ENCODE measurements at regions of chr21 and their contacts with region 1.

Region 1: GRCh38 chr21:32770871-32771523 is 558 bp downstream of the PAXBP1 start:
- DNase-seq: peak; percentile 62
- H3K4me3 ChIP-seq: peak overlapping the region; percentile 59 to 84 (median 73)
- H3K27ac ChIP-seq: peak overlapping the region; percentile 67
- H3K4me1 ChIP-seq: peaks cover 10% of the 10 kb centered on the region
- H3K27me3 ChIP-seq: no peaks in the 10 kb centered on the region
- CTCF ChIP-seq: peak in 1 of 2 donors; percentile 10

Region 2: DNA sequence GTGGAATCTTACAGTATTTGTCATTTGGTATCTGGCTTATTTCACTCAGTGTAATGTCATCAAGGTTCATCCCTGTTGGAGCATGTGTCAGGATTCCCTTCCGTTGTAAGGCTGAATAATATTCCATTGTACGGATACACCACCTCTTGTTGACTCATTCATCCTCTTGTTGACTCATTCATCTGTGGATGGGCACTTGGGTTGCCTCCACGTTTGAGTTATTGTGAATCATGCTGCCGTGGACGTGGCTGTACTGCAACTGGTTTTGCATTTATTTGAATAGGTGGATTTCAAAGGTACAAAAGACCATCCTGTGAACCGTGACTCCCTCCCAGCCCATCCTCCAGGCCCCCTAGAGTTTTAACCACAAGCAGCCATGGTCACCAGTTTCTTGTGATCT is 173.8 kb before region 1 on chr21:
- CTCF ChIA-PET with region 1: no interaction called
- dilution Hi-C with region 1: no loop called
- in situ Hi-C with region 1: no loop called
- intact Hi-C with region 1: no loop called
- DNase-seq: peak; percentile 97
- H3K4me3 ChIP-seq: no peak overlapping the region
- H3K27ac ChIP-seq: peak overlapping the region; percentile 84
- H3K4me1 ChIP-seq: peaks cover 29% of the 10 kb centered on the region
- H3K27me3 ChIP-seq: no peaks in the 10 kb centered on the region
- CTCF ChIP-seq: no peak

Region 3: GRCh38 chr21:32826329-32827167 is 55.6 kb after region 1 on chr21:
- CTCF ChIA-PET with region 1: no interaction called
- dilution Hi-C with region 1: no loop called
- in situ Hi-C with region 1: no loop called
- intact Hi-C with region 1: loop called (anchors 5 kb)
- DNase-seq: peak; percentile 38
- H3K4me3 ChIP-seq: no peak overlapping the region
- H3K27ac ChIP-seq: no peak overlapping the region
- H3K4me1 ChIP-seq: no peaks in the 10 kb centered on the region
- H3K27me3 ChIP-seq: no peaks in the 10 kb centered on the region
- CTCF ChIP-seq: peak; percentile 50 to 74

Region 4: DNA sequence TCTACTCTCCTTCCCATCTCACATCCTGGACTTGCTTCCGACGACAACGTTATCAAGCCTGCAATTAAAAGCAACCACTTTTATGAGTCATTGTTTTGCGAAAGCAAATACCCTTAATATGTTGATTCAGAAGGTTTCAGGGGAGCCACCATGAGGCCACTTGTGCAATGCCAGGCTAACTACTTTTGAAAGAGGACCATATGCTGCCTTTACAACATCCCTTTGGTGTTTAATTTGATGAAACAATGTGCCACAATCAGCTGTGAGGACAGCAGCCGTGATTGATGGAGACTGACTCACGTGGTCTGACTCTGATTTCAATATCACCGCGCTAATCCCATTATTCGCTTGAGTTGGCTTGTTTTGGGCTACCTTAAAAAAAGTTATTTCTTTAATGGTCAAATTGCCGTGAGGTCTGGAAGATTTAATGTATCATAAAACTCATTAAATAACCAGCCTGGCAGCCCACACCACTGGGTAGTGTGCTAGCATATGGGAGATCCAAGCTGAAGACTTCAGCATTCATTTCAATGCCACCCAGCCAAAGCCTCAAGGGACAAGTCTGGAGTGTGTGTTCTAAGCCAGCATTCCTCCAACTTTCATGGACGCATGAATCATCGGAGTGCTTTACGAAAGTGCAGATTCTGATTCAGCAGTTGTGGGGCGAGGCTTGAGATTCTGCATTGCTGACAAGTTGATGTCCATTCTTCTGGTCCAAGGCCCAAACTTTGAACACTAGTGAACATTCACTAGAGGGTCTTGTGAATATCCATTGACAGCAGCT is 73.8 kb after region 1 on chr21:
- CTCF ChIA-PET with region 1: no interaction called
- dilution Hi-C with region 1: no loop called
- in situ Hi-C with region 1: no loop called
- intact Hi-C with region 1: no loop called
- DNase-seq: peak; percentile 60
- H3K4me3 ChIP-seq: no peak overlapping the region
- H3K27ac ChIP-seq: no peak overlapping the region
- H3K4me1 ChIP-seq: no peaks in the 10 kb centered on the region
- H3K27me3 ChIP-seq: peaks cover 5% of the 10 kb centered on the region
- CTCF ChIP-seq: no peak

Region 5: DNA sequence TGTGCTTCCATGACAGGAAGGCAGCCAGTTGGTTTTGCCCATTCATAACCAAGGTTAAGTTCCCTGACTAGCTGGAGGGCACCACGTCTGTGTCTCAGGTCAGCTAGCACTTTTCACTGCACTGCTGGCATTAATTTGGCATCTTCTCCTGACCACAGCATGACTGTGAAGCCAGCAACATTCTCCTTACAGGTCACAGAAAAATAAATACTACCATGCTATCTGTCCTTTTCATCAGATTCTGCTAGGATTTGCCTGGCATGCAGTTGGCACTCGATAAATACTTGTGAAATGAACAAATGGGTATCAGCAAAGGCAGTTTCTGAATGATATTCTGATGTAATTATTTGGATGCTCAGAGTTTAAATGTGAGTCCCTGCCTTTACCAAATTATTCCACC is 412.4 kb after region 1 on chr21:
- CTCF ChIA-PET with region 1: interaction called, 19 read pairs
- dilution Hi-C with region 1: no loop called
- in situ Hi-C with region 1: no loop called
- intact Hi-C with region 1: no loop called
- DNase-seq: no peak
- H3K4me3 ChIP-seq: no peak overlapping the region
- H3K27ac ChIP-seq: no peak overlapping the region
- H3K4me1 ChIP-seq: no peaks in the 10 kb centered on the region
- H3K27me3 ChIP-seq: no peaks in the 10 kb centered on the region
- CTCF ChIP-seq: no peak

Measured in mammary epithelial cell (primary cell).